Calu3 (cell line): ENCODE measurements at regions of chr20 and their contacts with region 1.

Region 1: DNA sequence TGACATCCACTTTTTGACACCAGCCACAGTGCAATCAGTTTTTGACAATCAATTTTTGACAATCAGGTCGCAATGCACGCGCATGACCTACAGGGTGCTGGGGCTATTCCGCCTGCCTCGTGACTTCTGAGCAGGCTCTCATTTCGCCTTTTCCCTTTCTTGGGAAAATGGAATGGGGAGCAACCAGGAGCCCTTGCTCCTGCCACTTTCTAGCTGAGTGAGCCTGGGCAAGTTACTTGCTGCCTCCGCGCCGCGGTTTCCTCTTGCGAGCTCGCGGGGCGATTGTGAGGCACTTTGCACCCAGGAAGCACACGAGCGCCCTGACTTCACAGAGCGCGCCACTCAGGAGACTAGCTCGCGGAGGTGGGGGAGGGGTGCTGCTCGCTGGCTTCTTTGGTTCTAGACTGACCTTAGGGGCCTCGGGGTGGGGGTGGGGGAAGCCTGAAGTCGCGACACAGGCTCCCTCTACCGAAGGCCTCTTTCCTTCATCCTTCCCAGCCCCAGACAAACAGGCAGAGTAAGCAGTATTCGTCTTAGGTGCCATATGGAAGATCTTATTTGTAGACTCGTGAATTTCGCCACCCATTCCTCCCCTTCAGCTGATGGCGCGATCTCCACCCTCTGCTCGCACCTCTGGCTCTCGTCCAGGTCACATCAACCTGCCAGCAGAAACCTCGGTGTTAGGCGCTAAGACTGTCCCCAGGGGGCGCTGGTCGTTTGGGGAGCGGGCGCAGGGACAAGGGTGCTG is 4.6 kb downstream of the TP53TG5 start:
- DNase-seq: peak; percentile 98
- H3K4me3 Mint-ChIP-seq: peak overlapping the region; percentile 84
- H3K27ac Mint-ChIP-seq: peak overlapping the region; percentile 70
- H3K4me1 Mint-ChIP-seq: no peaks in the 10 kb centered on the region
- H3K27me3 Mint-ChIP-seq: no peaks in the 10 kb centered on the region
- CTCF ChIP-seq: peak; percentile 94

Region 2: DNA sequence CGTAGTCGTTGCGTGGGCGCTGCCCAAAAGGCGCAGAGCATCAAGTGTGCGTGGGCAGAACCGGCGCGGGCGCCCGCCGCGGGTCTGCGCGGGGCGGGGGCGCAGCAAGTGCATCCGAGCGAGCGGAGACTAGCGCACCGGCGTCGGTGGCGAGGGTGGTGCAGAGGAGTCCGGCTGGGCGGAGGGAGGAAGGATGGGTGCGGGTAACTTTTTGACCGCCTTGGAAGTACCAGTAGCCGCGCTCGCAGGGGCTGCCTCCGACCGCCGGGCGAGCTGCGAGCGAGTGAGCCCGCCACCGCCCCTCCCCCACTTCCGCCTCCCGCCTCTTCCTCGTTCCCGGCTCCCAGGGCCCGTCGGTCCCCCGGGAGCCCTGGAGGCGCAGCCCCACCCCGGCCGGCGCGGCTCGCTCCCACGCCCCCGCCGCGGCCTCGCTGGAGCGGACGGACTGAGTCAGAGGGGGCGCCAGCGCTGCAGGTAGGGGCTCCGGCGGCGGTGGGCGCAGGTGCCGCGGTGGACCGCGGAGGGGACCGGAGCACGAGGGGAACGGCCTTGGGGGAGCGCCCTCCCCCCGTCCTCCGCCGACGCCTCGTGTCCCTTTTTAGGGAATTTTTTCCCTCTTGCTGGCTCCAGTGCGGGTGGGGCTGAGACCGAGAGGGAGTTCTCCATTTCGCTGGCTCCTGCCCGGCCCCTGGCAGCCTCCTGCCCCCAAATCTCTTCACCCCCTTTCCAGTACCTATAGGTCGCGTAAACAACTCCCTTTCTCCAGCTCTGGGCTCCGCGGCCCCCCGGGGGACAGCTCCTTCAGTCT is 32.9 kb after region 1 on chr20:
- CTCF ChIA-PET with region 1: interaction called, 12 read pairs
- intact Hi-C with region 1: no loop called
- DNase-seq: peak; percentile 84
- H3K4me3 Mint-ChIP-seq: peak overlapping the region; percentile 86
- H3K27ac Mint-ChIP-seq: peak overlapping the region; percentile 72
- H3K4me1 Mint-ChIP-seq: peaks cover 30% of the 10 kb centered on the region
- H3K27me3 Mint-ChIP-seq: no peaks in the 10 kb centered on the region
- CTCF ChIP-seq: no peak

Region 3: DNA sequence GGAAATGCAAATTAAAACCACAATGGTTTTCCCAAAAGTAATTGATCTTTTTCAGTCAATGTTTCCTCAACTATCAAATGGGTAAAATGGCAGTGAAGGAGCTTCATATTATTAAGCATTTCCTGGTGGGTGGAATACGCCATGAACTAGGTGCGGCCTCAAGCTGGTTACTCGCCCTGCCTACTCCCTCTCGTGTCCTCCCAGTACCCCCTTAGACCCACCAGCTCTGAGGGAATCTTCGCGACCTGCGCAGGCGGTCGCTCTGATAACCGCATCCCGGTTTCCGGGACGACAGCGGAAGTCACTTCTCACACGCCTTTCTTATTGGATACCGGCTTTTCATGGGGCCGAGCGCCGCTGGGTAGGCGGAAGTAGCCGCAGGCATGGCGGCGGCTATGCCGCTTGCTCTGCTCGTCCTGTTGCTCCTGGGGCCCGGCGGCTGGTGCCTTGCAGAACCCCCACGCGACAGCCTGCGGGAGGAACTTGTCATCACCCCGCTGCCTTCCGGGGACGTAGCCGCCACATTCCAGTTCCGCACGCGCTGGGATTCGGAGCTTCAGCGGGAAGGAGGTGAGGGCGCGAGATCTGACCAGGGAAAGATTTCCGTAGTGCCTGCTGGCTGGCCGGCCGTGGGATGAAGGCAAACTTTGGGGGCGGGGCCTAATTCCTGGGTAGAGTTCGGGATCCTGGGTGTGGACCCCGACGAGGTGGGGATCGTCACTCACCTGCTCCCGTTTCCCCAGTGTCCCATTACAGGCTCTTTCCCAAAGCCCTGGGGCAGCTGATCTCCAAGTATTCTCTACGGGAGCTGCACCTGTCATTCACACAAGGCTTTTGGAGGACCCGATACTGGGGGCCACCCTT is 42.5 kb after region 1 on chr20 and contains the start of gene PIGT:
- CTCF ChIA-PET with region 1: interaction called, 10 read pairs
- intact Hi-C with region 1: no loop called
- DNase-seq: peak; percentile 91
- H3K4me3 Mint-ChIP-seq: peak within 1 kb of the TSS; percentile 92
- H3K27ac Mint-ChIP-seq: peak within 1 kb of the TSS; percentile 80
- H3K4me1 Mint-ChIP-seq: peaks cover 24% of the 10 kb centered on the region
- H3K27me3 Mint-ChIP-seq: no peaks in the 10 kb centered on the region
- CTCF ChIP-seq: no peak
- total RNA-seq, gene PIGT: 192 and 193 TPM in 2 replicates

Region 4: DNA sequence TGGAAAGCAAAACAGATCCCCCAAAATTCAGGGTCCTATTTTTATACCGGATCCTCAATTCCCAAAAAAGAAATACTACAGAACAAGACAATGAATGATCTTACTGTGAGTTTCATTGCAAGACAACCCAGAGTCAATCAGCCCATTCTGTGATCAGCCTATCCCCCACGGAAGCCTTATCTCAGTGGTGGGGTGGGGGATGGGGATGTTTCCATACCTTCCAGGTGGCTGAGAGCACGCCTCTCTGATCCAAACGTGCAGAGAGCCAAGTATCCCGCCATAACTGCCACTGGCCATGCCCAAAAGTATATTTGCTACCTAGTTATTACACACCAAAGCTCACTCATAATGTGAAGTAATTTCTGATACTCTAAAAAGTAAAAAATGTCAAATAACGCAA is 111.1 kb after region 1 on chr20:
- CTCF ChIA-PET with region 1: no interaction called
- intact Hi-C with region 1: no loop called
- DNase-seq: no peak
- H3K4me3 Mint-ChIP-seq: no peak overlapping the region
- H3K27ac Mint-ChIP-seq: no peak overlapping the region
- H3K4me1 Mint-ChIP-seq: peaks cover 35% of the 10 kb centered on the region
- H3K27me3 Mint-ChIP-seq: no peaks in the 10 kb centered on the region
- CTCF ChIP-seq: no peak

Region 5: DNA sequence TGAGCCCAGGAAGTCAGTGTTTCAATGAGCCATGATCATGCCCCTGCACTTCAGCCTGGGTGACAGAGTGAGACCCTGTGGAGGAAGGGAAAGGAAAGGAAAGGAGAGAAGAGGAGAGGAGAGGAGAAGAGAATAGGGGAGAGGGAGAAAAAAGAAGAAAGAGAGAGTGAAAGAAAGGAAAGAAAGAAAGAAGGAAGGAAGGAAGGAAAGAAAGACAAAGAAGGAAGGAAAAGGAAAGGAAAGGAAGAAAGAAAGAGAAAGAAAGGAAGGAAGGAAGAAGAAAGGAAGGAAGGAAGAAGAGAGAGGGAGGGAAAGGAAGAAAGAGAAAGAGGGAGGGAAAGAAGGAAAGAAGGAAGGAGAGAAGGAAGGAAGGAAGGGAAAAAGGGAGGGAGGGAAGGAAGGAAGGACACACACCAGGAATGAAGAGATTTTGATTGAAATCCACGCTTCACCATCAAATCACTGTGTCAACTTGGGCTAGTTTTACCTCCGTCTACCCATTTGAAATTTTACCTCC is 191.3 kb after region 1 on chr20:
- CTCF ChIA-PET with region 1: no interaction called
- intact Hi-C with region 1: no loop called
- DNase-seq: no peak
- H3K4me3 Mint-ChIP-seq: no peak overlapping the region
- H3K27ac Mint-ChIP-seq: no peak overlapping the region
- H3K4me1 Mint-ChIP-seq: no peaks in the 10 kb centered on the region
- H3K27me3 Mint-ChIP-seq: peaks cover 48% of the 10 kb centered on the region
- CTCF ChIP-seq: no peak